K562 (cell line): ENCODE measurements at regions of chr14 and their contacts with region 1.

Region 1: DNA sequence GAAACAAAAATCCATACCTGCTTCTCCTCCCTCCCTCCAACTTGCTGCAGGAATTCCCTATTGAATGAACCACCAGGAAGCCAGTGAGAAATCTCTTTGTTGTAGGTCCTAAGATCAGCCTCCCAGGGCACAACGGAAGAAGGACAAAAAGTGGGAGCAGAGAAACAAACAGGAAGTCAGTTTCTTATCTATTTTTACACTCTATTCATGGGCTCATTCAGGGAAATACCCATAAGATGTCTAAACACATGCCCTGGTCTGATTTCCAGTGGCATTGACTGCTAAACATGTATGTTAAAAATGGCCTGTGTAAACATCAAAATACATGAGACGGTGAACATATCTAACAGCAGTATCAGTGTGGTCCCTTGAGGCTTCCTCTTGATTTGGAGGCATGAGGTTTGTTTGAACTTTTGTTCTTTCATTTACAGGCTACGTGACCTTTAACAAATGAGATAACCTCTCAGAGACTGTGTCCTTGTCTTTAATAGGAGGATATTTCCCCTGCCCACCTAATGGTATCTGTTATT is 18.8 kb downstream of the GPR65 start:
- DNase-seq: peak in 2 of 4 experiments; percentile 7 to 21
- ATAC-seq: peak; percentile 63
- H3K4me3 ChIP-seq: no peak overlapping the region
- H3K27ac ChIP-seq: peak overlapping the region; percentile 36; the same call in 1 of the 3 replicates
- H3K4me1 ChIP-seq: peaks cover 0 to 40% of the 10 kb centered on the region in 2 experiments; a peak in 3 of 5 replicates
- H3K27me3 ChIP-seq: no peaks in the 10 kb centered on the region
- CTCF ChIP-seq: no peak
- EP300 ChIP-seq: peak; percentile 22; the same call in 1 of the 2 replicates
- POLR2A ChIP-seq: no peak
- RAD21 ChIP-seq: no peak

Region 2: GRCh38 chr14:87992718-87993628 is 30.8 kb before region 1 on chr14 and contains the start of gene GALC:
- CTCF ChIA-PET with region 1: no interaction called
- POLR2A ChIA-PET with region 1: no interaction called
- in situ Hi-C with region 1: no loop called
- intact Hi-C with region 1: loop called (anchors 2 kb)
- DNase-seq: peak; percentile 78 to 92 (median 80)
- ATAC-seq: peak; percentile 93
- H3K4me3 ChIP-seq: peak within 1 kb of the TSS; percentile 61
- H3K27ac ChIP-seq: peak within 1 kb of the TSS; percentile 69
- H3K4me1 ChIP-seq: peaks cover 13 to 31% of the 10 kb centered on the region in 2 experiments
- H3K27me3 ChIP-seq: no peaks in the 10 kb centered on the region
- CTCF ChIP-seq: peak in 1 of 3 experiments; percentile 16; a peak in 1 of 6 replicates
- EP300 ChIP-seq: peak; percentile 33; the same call in 1 of the 2 replicates
- POLR2A ChIP-seq: peak; percentile 67
- RAD21 ChIP-seq: peak in 1 of 2 experiments; percentile 9; a peak in 1 of 4 replicates
- polyA plus RNA-seq, gene GALC: 1.6 to 2.9 TPM

Region 3: GRCh38 chr14:88043529-88044443 is 20.1 kb after region 1 on chr14:
- CTCF ChIA-PET with region 1: no interaction called
- POLR2A ChIA-PET with region 1: no interaction called
- in situ Hi-C with region 1: no loop called
- intact Hi-C with region 1: no loop called
- DNase-seq: no peak
- ATAC-seq: no peak
- H3K4me3 ChIP-seq: no peak overlapping the region
- H3K27ac ChIP-seq: no peak overlapping the region
- H3K4me1 ChIP-seq: no peaks in the 10 kb centered on the region
- H3K27me3 ChIP-seq: no peaks in the 10 kb centered on the region; a peak in 1 of 5 replicates
- CTCF ChIP-seq: no peak
- EP300 ChIP-seq: no peak
- POLR2A ChIP-seq: no peak
- RAD21 ChIP-seq: no peak

Region 4: GRCh38 chr14:88089445-88089844 is 65.7 kb after region 1 on chr14:
- CTCF ChIA-PET with region 1: no interaction called
- POLR2A ChIA-PET with region 1: no interaction called
- in situ Hi-C with region 1: no loop called
- intact Hi-C with region 1: no loop called
- DNase-seq: no peak
- ATAC-seq: no peak
- H3K4me3 ChIP-seq: no peak overlapping the region
- H3K27ac ChIP-seq: no peak overlapping the region
- H3K4me1 ChIP-seq: no peaks in the 10 kb centered on the region
- H3K27me3 ChIP-seq: no peaks in the 10 kb centered on the region
- CTCF ChIP-seq: no peak
- EP300 ChIP-seq: no peak
- POLR2A ChIP-seq: no peak
- RAD21 ChIP-seq: no peak